B cell (primary cell): ENCODE measurements at regions of chr1 and their contacts with region 1.

Region 1: GRCh38 chr1:1098681-1099421 is 17.0 kb downstream of the C1orf159 start:
- DNase-seq: no peak
- ATAC-seq: no peak
- H3K4me3 ChIP-seq: no peak overlapping the region
- H3K4me3 Mint-ChIP-seq: no peak overlapping the region
- H3K27ac ChIP-seq: no peak overlapping the region
- H3K27ac Mint-ChIP-seq: no peak overlapping the region
- H3K4me1 ChIP-seq: no peaks in the 10 kb centered on the region
- H3K4me1 Mint-ChIP-seq: no peaks in the 10 kb centered on the region
- H3K27me3 ChIP-seq: no peaks in the 10 kb centered on the region
- H3K27me3 Mint-ChIP-seq: no peaks in the 10 kb centered on the region
- CTCF ChIP-seq: no peak

Region 2: GRCh38 chr1:1157426-1157913 is 58.6 kb after region 1 on chr1:
- CTCF ChIA-PET with region 1: no interaction called
- POLR2A ChIA-PET with region 1: no interaction called
- intact Hi-C with region 1: no loop called
- DNase-seq: peak; percentile 74
- ATAC-seq: peak; percentile 64
- H3K4me3 ChIP-seq: peak overlapping the region; percentile 52 to 93 (median 87)
- H3K4me3 Mint-ChIP-seq: peak overlapping the region; percentile 86
- H3K27ac ChIP-seq: peak overlapping the region; percentile 94 to 97
- H3K27ac Mint-ChIP-seq: peak overlapping the region; percentile 89
- H3K4me1 ChIP-seq: peaks cover 8 to 23% of the 10 kb centered on the region in 2 donors
- H3K4me1 Mint-ChIP-seq: peaks cover 5% of the 10 kb centered on the region
- H3K27me3 ChIP-seq: no peaks in the 10 kb centered on the region
- H3K27me3 Mint-ChIP-seq: no peaks in the 10 kb centered on the region
- CTCF ChIP-seq: no peak

Region 3: GRCh38 chr1:1256956-1257871 is 158.4 kb after region 1 on chr1:
- CTCF ChIA-PET with region 1: no interaction called
- POLR2A ChIA-PET with region 1: interaction called, 12 read pairs
- intact Hi-C with region 1: no loop called
- DNase-seq: no peak
- ATAC-seq: no peak
- H3K4me3 ChIP-seq: no peak overlapping the region
- H3K4me3 Mint-ChIP-seq: no peak overlapping the region
- H3K27ac ChIP-seq: no peak overlapping the region
- H3K27ac Mint-ChIP-seq: no peak overlapping the region
- H3K4me1 ChIP-seq: peaks cover 0 to 4% of the 10 kb centered on the region in 2 donors
- H3K4me1 Mint-ChIP-seq: peaks cover 16% of the 10 kb centered on the region
- H3K27me3 ChIP-seq: no peaks in the 10 kb centered on the region
- H3K27me3 Mint-ChIP-seq: no peaks in the 10 kb centered on the region
- CTCF ChIP-seq: no peak